ENCODE measurements at regions of chr6 and their contacts with region 1.

Region 1: GRCh38 chr6:64256483-64256882 is 620.9 kb downstream of the PHF3 start:
- DNase-seq: no peak
- H3K4me3 ChIP-seq: no peak overlapping the region
- H3K27ac ChIP-seq: no peak overlapping the region
- H3K4me1 ChIP-seq: no peaks in the 10 kb centered on the region
- H3K27me3 ChIP-seq: no peaks in the 10 kb centered on the region
- CTCF ChIP-seq: no peak
- EP300 ChIP-seq: no peak
- POLR2A ChIP-seq: no peak

Region 2: GRCh38 chr6:64221776-64222175 is 34.7 kb before region 1 on chr6:
- in situ Hi-C with region 1: no loop called
- intact Hi-C with region 1: loop called (anchors 2 kb)
- DNase-seq: no peak
- H3K4me3 ChIP-seq: no peak overlapping the region
- H3K27ac ChIP-seq: no peak overlapping the region
- H3K4me1 ChIP-seq: no peaks in the 10 kb centered on the region
- H3K27me3 ChIP-seq: no peaks in the 10 kb centered on the region
- CTCF ChIP-seq: no peak
- EP300 ChIP-seq: no peak
- POLR2A ChIP-seq: no peak